KBM-7 (cell line): ENCODE measurements at regions of chr4 and their contacts with region 1.

Region 1: DNA sequence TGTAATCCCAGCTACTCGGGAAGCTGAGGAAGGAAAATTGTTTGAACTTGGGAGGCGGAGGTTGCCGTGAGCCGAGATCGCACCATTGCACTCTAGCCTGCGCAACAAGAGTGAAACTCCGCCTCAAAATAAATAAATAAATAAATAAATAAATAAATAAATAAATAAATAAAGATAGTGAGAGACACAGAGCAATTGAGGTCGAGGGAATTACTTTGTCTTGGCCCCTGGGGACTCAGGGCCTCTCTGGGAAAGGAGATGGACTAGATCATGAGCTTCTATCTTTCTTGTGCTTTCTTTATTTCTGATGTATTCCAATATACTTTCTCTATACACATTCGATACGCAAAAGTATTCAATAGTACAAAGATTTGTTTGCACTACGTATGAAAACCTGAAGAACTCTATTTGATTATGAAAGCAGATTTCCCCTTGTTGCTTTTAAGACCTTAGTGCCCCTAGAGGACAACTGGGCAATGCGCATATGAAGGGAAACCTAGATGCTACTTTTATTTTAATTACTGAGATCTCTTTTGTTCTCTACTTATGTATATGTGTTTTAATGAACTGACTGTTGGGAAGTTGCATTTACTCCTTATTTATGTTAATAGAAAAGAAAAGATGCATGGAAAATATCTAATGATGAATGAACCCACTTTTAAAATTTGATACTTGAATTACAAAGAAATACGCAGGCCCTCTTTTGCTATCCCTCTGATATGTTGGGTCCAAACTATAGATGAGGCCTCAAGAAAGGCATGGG is 12.8 kb upstream of the ELOVL6 start:
- DNase-seq: peak; percentile 37

Region 2: GRCh38 chr4:110049951-110050925 is 160.9 kb before region 1 on chr4:
- in situ Hi-C with region 1: loop called (anchors 25 kb)
- DNase-seq: peak; percentile 49